HepG2 (cell line): ENCODE measurements at regions of chr19 and their contacts with region 1.

Region 1: GRCh38 chr19:52397310-52398080 is at the start of gene ZNF528:
- DNase-seq: peak; percentile 89
- ATAC-seq: peak; percentile 100
- H3K4me3 ChIP-seq: peak within 1 kb of the TSS; percentile 87 to 89 (median 89)
- H3K27ac ChIP-seq: peak within 1 kb of the TSS; percentile 56
- H3K4me1 ChIP-seq: peaks cover 9% of the 10 kb centered on the region; the same call in 1 of the 2 replicates
- H3K27me3 ChIP-seq: no peaks in the 10 kb centered on the region; a peak in 1 of 5 replicates
- CTCF ChIP-seq: no peak
- EP300 ChIP-seq: no peak
- POLR2A ChIP-seq: peak; percentile 64 to 76
- RAD21 ChIP-seq: no peak
- total RNA-seq, gene ZNF528: 9.2 and 10.0 TPM in 2 replicates

Region 2: GRCh38 chr19:52428937-52429336 is 31.4 kb after region 1 on chr19 and contains the start of gene ZNF534:
- CTCF ChIA-PET with region 1: no interaction called
- POLR2A ChIA-PET with region 1: no interaction called
- in situ Hi-C with region 1: no loop called
- intact Hi-C with region 1: no loop called
- DNase-seq: no peak
- ATAC-seq: no peak
- H3K4me3 ChIP-seq: no peak within 1 kb of the TSS
- H3K27ac ChIP-seq: no peak within 1 kb of the TSS
- H3K4me1 ChIP-seq: no peaks in the 10 kb centered on the region
- H3K27me3 ChIP-seq: no peaks in the 10 kb centered on the region
- CTCF ChIP-seq: no peak
- EP300 ChIP-seq: no peak
- POLR2A ChIP-seq: no peak
- RAD21 ChIP-seq: no peak
- total RNA-seq, gene ZNF534: 0.04 TPM in 1 of 2 replicates, not detected in the other

Region 3: GRCh38 chr19:52442179-52442578 is 44.7 kb after region 1 on chr19:
- CTCF ChIA-PET with region 1: no interaction called
- POLR2A ChIA-PET with region 1: no interaction called
- in situ Hi-C with region 1: no loop called
- intact Hi-C with region 1: no loop called
- DNase-seq: no peak
- ATAC-seq: no peak
- H3K4me3 ChIP-seq: no peak overlapping the region
- H3K27ac ChIP-seq: no peak overlapping the region
- H3K4me1 ChIP-seq: no peaks in the 10 kb centered on the region
- H3K27me3 ChIP-seq: no peaks in the 10 kb centered on the region
- CTCF ChIP-seq: no peak
- EP300 ChIP-seq: no peak
- POLR2A ChIP-seq: no peak
- RAD21 ChIP-seq: no peak

Region 4: GRCh38 chr19:52453324-52454094 is 56.0 kb after region 1 on chr19 and contains the start of gene ZNF578:
- CTCF ChIA-PET with region 1: no interaction called
- POLR2A ChIA-PET with region 1: no interaction called
- in situ Hi-C with region 1: no loop called
- intact Hi-C with region 1: loop called (anchors 2 kb)
- DNase-seq: no peak
- ATAC-seq: no peak
- H3K4me3 ChIP-seq: no peak within 1 kb of the TSS
- H3K27ac ChIP-seq: no peak within 1 kb of the TSS
- H3K4me1 ChIP-seq: no peaks in the 10 kb centered on the region
- H3K27me3 ChIP-seq: no peaks in the 10 kb centered on the region
- CTCF ChIP-seq: no peak
- EP300 ChIP-seq: no peak
- POLR2A ChIP-seq: no peak
- RAD21 ChIP-seq: no peak
- total RNA-seq, gene ZNF578: not detected in 2 replicates

Region 5: DNA sequence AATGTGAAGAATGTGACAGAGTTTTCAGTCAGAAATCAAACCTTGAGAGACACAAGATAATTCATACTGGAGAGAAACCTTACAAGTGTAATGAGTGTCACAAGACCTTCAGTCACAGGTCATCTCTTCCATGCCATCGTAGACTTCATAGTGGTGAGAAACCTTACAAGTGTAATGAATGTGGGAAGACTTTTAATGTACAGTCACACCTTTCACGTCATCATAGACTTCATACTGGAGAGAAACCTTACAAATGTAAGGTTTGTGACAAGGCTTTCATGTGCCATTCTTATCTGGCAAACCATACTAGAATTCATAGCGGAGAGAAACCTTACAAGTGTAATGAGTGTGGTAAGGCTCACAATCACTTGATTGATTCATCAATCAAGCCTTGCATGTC is 114.3 kb after region 1 on chr19:
- CTCF ChIA-PET with region 1: no interaction called
- POLR2A ChIA-PET with region 1: no interaction called
- in situ Hi-C with region 1: no loop called
- intact Hi-C with region 1: no loop called
- DNase-seq: no peak
- ATAC-seq: no peak
- H3K4me3 ChIP-seq: no peak overlapping the region
- H3K27ac ChIP-seq: no peak overlapping the region
- H3K4me1 ChIP-seq: no peaks in the 10 kb centered on the region
- H3K27me3 ChIP-seq: no peaks in the 10 kb centered on the region
- CTCF ChIP-seq: no peak
- EP300 ChIP-seq: no peak
- POLR2A ChIP-seq: no peak
- RAD21 ChIP-seq: no peak

Region 6: DNA sequence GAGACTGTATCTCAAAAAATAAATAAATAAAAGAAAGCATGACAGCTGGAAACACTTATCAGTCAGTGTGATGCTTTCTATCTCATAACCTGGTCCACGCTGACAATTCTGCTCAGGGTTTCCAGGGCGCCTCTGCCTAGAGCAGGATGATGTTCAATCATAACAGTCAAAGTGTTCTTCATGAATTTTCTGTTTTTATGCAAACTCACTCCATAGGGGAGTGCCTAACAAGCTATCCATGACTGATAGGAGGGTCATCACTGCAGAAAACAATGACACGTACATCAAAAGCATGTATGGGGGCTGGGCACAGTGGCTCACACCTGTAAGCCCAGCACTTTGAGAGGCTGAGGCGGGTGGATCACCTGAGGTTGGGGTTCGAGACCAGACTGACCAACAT is 282.1 kb after region 1 on chr19:
- CTCF ChIA-PET with region 1: no interaction called
- POLR2A ChIA-PET with region 1: no interaction called
- in situ Hi-C with region 1: no loop called
- intact Hi-C with region 1: no loop called
- DNase-seq: no peak
- ATAC-seq: no peak
- H3K4me3 ChIP-seq: no peak overlapping the region
- H3K27ac ChIP-seq: no peak overlapping the region
- H3K4me1 ChIP-seq: peaks cover 17% of the 10 kb centered on the region
- H3K27me3 ChIP-seq: no peaks in the 10 kb centered on the region
- CTCF ChIP-seq: no peak
- EP300 ChIP-seq: no peak
- POLR2A ChIP-seq: no peak
- RAD21 ChIP-seq: no peak